Activated CD8-positive, alpha-beta memory T cell treated with anti-CD3 and anti-CD28 coated beads, Interleukin-2, amount 10 ng/mL, durations not matched to agents 7 days and 5 days (primary cell): ENCODE measurements at regions of chr7 and their contacts with region 1.

Region 1: DNA sequence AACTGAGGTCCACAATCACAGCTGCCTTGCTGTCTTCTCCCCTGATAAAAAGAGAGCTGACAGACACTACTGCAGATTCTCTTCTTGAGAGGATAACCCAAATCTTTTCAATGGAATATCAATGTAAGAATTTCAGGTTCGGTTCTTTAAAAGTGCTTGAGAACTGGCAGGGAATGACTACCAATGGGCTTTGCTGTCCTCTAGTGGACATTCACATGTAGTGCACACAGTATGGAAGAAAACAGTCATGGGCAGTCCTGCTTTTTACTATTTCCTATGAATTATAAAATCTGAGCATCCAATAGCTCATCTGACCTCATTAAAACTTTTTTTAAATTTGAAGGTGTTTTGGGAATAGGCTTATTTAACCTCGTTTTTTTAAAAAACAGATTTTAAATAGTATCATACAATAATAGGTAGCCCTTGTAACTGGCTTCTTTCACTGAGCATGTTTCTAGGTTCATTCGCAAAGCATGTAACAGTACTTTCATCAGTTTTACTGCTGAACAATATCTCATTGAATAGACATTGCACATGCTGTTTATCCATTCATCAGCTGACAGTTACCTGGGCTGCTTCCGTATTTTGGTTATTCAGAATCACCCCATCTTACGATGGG is 18.3 kb downstream of the FZD9 start:
- DNase-seq: no peak
- ATAC-seq: peak; percentile 67
- H3K4me3 Mint-ChIP-seq: no peak overlapping the region
- H3K27ac Mint-ChIP-seq: no peak overlapping the region
- H3K4me1 Mint-ChIP-seq: peaks cover 29% of the 10 kb centered on the region
- H3K27me3 Mint-ChIP-seq: no peaks in the 10 kb centered on the region

Region 2: GRCh38 chr7:73487486-73487885 is 35.6 kb after region 1 on chr7:
- CTCF ChIA-PET with region 1: interaction called, 11 read pairs
- DNase-seq: no peak
- ATAC-seq: no peak
- H3K4me3 Mint-ChIP-seq: no peak overlapping the region
- H3K27ac Mint-ChIP-seq: peak overlapping the region; percentile 26
- H3K4me1 Mint-ChIP-seq: peaks cover 2% of the 10 kb centered on the region
- H3K27me3 Mint-ChIP-seq: no peaks in the 10 kb centered on the region